Heart right ventricle (tissue), 16 donors: ENCODE measurements at regions of chr21 and their contacts with region 1.

Region 1: GRCh38 chr21:21828130-21828529 is 829.9 kb downstream of the NCAM2 start:
- DNase-seq: no peak
- ATAC-seq: no peak
- H3K4me3 ChIP-seq: no peak overlapping the region
- H3K27ac ChIP-seq: no peak overlapping the region
- H3K4me1 ChIP-seq: no peaks in the 10 kb centered on the region
- H3K27me3 ChIP-seq: no peaks in the 10 kb centered on the region
- CTCF ChIP-seq: no peak

Region 2: GRCh38 chr21:21888931-21889330 is 60.8 kb after region 1 on chr21:
- intact Hi-C with region 1: loop called in 1 of 10 experiments (anchors 10 kb)
- DNase-seq: no peak
- ATAC-seq: no peak
- H3K4me3 ChIP-seq: no peak overlapping the region
- H3K27ac ChIP-seq: no peak overlapping the region
- H3K4me1 ChIP-seq: no peaks in the 10 kb centered on the region
- H3K27me3 ChIP-seq: no peaks in the 10 kb centered on the region
- CTCF ChIP-seq: no peak